Activated CD4-positive, alpha-beta memory T cell treated with anti-CD3 and anti-CD28 coated beads, Interleukin-2, amount 10 ng/mL, durations not matched to agents 7 days and 5 days (primary cell): ENCODE measurements at regions of chr10 and their contacts with region 1.

Region 1: DNA sequence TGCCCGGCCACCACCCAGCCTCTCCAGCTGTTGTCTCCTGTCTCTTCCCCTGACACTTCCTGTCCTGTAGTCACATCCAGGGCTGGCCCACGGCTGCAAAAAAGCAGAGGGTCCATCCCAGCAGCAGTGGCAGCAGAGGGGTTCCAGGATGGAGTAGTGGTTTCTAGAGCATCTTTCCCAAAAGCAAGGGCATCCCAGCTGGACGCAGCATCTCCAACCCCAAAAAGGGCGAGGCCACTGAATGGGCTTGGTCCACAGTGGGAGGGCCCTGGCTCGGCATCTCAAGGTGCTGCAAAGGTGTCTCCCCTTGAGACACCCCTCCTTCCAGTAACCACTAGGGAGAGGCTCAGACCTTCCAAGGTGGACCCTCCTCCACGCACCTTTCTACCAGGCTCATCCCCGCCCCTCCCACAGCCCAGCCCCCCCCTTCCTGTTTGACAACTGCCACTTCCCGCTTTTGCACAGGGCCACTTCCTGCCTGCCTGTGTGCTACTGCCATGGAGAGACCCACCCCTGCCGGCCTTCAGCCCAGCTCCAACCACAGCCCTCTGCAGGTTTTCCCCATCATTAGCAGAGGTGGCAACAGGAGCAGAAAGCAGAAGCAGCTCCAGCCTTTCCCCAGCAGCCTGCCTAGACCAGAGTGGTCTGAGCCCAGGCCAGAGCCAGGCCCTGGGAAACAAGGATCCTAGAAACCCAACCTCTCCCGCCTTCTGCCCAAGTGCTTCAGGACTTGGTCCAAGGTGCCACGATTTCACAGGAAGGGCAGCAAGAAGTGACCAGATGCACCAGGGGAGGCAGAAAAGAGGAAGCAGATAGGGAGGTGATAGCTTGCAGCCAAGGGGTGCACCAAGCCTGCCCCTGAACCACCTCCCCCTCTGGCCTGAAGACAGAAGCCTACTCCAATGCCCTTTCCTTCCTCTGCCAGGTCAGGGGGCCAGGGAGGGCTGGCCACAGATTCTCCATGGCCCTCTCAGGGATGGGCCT is 8.6 kb downstream of the CAMK2G start:
- DNase-seq: peak; percentile 70
- H3K4me3 Mint-ChIP-seq: peak overlapping the region; percentile 80
- H3K27ac Mint-ChIP-seq: peak overlapping the region; percentile 99
- H3K4me1 Mint-ChIP-seq: peaks cover 86% of the 10 kb centered on the region
- H3K27me3 Mint-ChIP-seq: no peaks in the 10 kb centered on the region

Region 2: DNA sequence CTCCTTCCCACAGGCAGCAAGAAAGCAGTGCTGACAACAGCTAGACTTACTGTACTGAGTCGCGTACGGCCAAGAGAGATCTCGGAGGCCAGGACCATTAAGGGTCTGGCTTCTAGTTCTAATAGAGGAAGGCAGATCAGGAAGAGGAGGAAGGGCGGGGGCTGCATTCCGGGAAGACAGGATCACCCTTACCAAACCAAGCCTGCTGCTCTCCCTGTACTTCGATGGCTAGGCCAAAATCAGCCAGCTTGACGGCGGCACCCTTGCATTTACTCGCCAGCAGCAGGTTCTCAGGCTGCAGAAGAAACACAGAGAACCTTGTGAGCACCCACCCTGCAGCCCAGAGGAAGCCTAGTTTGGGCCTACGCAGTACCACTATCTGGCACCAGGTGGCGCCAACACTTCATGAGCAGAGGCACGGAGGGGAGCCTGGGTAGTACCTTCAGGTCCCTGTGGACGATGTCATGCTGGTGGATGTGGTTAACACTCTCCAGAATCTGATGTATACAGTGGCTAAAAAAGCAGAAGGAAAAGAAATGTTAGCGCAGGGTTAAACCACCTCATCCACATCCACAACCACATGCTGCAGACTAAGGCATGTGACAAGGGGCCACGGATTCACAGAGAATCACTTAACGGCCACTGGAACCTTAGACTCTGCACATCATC is 16.8 kb before region 1 on chr10:
- CTCF ChIA-PET with region 1: interaction called, 17 read pairs
- POLR2A ChIA-PET with region 1: interaction called, 8 read pairs
- DNase-seq: peak; percentile 94
- H3K4me3 Mint-ChIP-seq: no peak overlapping the region
- H3K27ac Mint-ChIP-seq: peak overlapping the region; percentile 56
- H3K4me1 Mint-ChIP-seq: peaks cover 22% of the 10 kb centered on the region
- H3K27me3 Mint-ChIP-seq: no peaks in the 10 kb centered on the region

Region 3: GRCh38 chr10:74186678-74187077 is 320.9 kb after region 1 on chr10:
- CTCF ChIA-PET with region 1: no interaction called
- POLR2A ChIA-PET with region 1: no interaction called
- DNase-seq: no peak
- H3K4me3 Mint-ChIP-seq: no peak overlapping the region
- H3K27ac Mint-ChIP-seq: no peak overlapping the region
- H3K4me1 Mint-ChIP-seq: peaks cover 35% of the 10 kb centered on the region
- H3K27me3 Mint-ChIP-seq: no peaks in the 10 kb centered on the region